Pancreas (tissue), 10 donors: ENCODE measurements at regions of chr9 and their contacts with region 1.

Region 1: DNA sequence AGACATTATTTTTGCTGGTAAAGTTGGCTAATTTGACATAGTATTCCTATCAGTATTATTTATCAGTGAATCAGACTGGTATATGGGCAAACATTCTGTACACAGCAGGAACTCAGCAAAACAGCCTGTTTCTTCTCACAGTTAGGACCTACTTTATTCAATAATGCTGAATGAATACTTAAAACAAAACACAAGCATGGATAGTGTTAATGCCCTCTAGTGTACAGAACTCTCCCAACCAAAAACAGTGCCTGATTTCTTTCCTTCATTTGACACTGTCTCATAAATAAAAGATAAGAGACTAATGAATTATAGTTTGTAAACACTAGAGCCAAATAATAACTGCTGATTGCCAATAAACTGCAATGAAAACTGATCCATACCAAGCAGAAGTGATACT is 1113.3 kb downstream of the PTPRD start:
- DNase-seq: no peak
- ATAC-seq: no peak
- H3K4me3 ChIP-seq: no peak overlapping the region
- H3K27ac ChIP-seq: no peak overlapping the region
- H3K4me1 ChIP-seq: no peaks in the 10 kb centered on the region
- H3K27me3 ChIP-seq: no peaks in the 10 kb centered on the region
- CTCF ChIP-seq: no peak

Region 2: DNA sequence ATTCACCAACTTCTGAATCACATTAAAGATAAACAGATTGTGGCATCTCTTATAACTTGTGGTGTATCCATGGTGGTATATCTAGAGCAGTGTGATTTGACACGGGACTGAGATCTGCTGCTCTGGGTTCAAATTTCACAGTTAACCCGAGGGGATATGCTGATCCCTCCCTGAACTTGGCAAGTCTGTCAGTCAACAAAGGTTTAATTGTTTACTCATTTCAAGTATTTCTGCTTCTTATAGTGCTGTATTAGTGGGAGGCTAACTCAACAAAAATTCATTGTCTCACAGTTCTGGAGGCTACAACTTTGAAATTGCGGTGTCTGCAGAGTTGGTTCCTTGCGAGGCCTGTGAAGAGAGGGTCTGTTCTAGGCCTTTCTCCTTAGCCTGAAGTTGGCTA is 61.9 kb before region 1 on chr9:
- intact Hi-C with region 1: loop called in 1 of 3 experiments (anchors 10 kb)
- DNase-seq: no peak
- ATAC-seq: no peak
- H3K4me3 ChIP-seq: no peak overlapping the region
- H3K27ac ChIP-seq: no peak overlapping the region
- H3K4me1 ChIP-seq: no peaks in the 10 kb centered on the region
- H3K27me3 ChIP-seq: no peaks in the 10 kb centered on the region
- CTCF ChIP-seq: no peak

Region 3: DNA sequence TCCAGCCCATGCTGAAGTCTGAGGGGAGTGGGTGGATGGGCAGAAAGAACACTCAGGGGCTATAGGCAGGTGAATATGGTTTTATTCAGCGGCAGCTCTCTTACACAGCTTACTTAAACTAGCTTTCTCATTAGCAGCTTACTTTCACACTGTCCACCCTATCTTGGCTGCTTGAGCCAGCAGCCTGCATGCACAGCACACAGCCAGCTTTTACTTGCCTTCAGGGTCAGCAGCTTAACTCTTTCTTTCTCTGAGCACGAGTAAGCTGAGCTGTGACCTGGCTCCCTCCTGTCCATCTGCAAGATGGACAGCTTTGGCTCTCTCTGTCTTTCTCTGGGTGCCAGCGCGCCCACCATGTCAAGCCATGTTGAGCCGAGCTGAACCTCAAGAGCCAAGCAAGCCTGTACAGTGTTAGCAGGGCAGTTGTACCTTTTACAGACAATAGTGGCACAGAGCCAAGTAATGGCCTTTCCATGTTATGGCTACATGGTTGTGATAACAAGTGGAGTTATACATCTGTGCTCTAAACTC is 58.3 kb after region 1 on chr9:
- intact Hi-C with region 1: no loop called
- DNase-seq: peak in 1 of 6 donors; percentile 9
- ATAC-seq: no peak
- H3K4me3 ChIP-seq: no peak overlapping the region
- H3K27ac ChIP-seq: no peak overlapping the region
- H3K4me1 ChIP-seq: no peaks in the 10 kb centered on the region
- H3K27me3 ChIP-seq: no peaks in the 10 kb centered on the region
- CTCF ChIP-seq: no peak